Ascending aorta (tissue), 2 donors: ENCODE measurements at regions of chr20 and their contacts with region 1.

Region 1: DNA sequence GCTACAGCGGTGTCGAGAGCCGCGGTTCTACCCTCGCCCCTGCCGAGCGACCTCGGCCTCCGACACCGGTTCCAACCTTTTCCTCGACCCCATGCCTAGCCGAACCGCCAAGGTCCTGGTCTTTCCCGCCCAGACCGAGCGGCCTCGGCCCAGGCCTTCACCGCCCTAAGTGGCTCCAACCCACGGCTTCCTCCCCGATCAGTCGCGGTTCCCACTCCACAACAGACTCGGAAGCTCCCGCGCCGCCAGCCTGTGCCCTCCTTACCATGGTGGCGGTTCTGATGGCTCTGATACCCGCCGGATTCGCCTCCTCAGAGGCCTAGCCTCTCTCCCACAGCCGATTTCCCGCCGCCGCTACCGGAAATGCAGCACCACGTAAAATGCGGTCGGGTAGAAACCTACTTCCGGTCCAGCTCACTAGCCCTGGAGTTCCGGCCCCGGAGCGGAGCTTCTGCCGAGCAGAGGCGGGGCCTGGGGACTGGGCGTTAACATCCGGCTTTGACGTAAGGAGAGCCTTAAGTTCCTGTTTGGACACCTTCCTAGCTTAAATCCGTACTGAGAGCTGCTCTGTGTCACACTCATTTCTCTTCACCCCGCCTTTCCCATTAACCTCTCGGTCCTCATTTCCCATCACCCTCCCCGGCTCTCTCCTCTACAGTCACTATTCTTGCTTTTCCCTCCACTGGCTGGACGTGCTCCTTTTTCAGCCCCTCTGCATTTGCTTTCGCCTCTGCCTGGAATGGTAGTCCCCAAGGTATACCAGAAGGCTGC is at the start of gene SNRPB:
- DNase-seq: peak; percentile 88 to 99
- H3K4me3 ChIP-seq: peak within 1 kb of the TSS; percentile 76 to 81
- H3K27ac ChIP-seq: peak within 1 kb of the TSS; percentile 94 to 96
- H3K4me1 ChIP-seq: peaks cover 4 to 18% of the 10 kb centered on the region in 2 donors
- H3K27me3 ChIP-seq: no peaks in the 10 kb centered on the region
- CTCF ChIP-seq: no peak
- total RNA-seq, gene SNRPB: 83.5 TPM

Region 2: DNA sequence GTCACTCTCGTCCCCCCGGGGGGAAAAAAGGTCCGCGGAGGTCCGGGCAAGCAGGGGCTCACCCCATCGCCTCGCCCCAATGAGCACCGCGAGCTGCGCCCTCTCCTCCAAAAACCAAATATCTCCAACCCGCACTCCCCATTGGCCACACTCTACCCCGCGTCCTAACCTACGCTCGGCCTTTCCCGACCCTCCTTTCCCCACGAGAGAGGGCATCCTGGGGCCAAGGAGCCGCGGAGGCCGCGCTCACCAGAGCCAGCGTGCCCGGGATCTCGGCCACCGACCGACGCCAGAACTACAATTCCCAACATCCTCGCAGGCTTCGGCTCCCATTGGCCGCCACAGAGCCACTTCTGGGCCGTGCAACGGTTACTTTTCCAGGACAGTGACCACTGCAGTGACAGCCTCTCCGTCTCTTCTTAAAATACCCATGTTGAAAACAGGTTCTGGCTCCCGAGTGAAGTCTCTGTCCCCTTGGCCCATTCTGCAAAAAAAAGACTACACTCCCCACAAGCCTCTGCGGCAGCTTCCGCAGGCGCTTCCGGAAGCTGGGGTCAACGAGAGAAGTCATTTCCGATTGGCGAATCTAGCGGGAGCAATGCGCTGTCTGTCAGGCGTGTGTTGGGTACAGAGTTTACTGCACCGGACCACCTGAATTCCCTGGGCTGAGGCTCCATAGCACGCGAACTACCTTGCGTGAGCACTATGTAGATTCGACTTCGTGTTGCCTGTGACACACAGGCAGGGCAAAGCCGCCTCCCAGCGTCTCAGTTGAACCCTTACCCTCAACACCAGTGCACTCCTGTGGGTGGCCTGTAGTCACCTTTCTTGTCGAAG is 38.2 kb after region 1 on chr20 and contains the start of gene ZNF343:
- intact Hi-C with region 1: loop called (anchors 1 kb)
- DNase-seq: peak in 1 of 2 donors; percentile 88
- H3K4me3 ChIP-seq: peak within 1 kb of the TSS; percentile 74 to 80
- H3K27ac ChIP-seq: peak within 1 kb of the TSS; percentile 88 to 90
- H3K4me1 ChIP-seq: peaks cover 0 to 13% of the 10 kb centered on the region in 2 donors
- H3K27me3 ChIP-seq: no peaks in the 10 kb centered on the region
- CTCF ChIP-seq: no peak
- total RNA-seq, gene ZNF343: 0.64 TPM

Region 3: DNA sequence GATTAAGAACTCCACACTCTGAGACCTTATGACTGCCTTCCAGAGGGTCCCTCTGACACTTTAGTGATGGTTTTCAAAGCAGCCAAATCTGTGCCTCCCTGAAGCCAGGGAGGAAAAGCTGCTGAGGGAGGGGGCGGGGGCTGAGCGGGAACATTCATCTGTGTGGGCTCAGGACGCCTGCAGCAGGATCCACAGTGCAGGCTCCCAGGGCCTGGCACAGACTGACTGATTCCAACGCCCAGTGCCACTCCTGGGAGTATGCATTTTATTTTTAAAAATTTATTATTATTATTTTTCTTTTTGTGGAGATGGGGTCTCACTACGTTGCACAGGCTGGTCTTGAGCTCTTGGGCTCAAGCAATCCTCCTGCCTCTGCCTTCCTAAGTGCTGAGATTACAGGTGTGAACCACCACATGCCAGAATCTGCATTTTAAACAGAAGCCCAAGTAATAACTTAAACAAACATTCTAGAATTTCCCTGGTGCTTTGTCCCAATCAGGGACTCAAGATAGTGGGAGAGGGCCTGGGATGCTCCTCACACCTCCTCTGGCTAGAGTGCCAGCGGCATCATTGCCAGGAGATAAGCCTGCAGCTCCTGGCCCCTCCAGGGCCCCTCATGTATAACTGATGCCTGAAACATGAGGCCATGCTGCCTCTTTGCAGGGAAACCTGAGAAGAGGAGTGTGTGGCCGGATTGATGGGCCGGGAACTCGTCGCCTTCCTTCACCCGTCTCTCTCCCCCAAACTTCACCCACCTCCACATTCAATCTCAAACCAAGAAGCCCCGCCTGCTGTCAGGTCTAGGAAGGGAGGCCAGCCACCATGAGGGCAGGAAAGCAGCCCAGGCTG is 65.3 kb after region 1 on chr20:
- intact Hi-C with region 1: no loop called
- DNase-seq: no peak
- H3K4me3 ChIP-seq: no peak overlapping the region
- H3K27ac ChIP-seq: no peak overlapping the region
- H3K4me1 ChIP-seq: no peaks in the 10 kb centered on the region
- H3K27me3 ChIP-seq: no peaks in the 10 kb centered on the region
- CTCF ChIP-seq: no peak

Region 4: GRCh38 chr20:2599288-2600006 is 128.8 kb after region 1 on chr20:
- intact Hi-C with region 1: no loop called
- DNase-seq: no peak
- H3K4me3 ChIP-seq: no peak overlapping the region
- H3K27ac ChIP-seq: no peak overlapping the region
- H3K4me1 ChIP-seq: no peaks in the 10 kb centered on the region
- H3K27me3 ChIP-seq: no peaks in the 10 kb centered on the region
- CTCF ChIP-seq: no peak